ENCODE measurements at regions of chr20 and their contacts with region 1.

Region 1: GRCh38 chr20:5569021-5569420 is 181.2 kb upstream of the SHLD1 start:
- DNase-seq: peak; percentile 22
- ATAC-seq: peak; percentile 92
- H3K4me3 ChIP-seq: no peak overlapping the region
- H3K27ac ChIP-seq: no peak overlapping the region
- H3K4me1 ChIP-seq: no peaks in the 10 kb centered on the region
- H3K27me3 ChIP-seq: no peaks in the 10 kb centered on the region
- CTCF ChIP-seq: peak; percentile 68; the same call in 1 of the 2 replicates

Region 2: GRCh38 chr20:5596401-5597193 is 27.6 kb after region 1 on chr20:
- CTCF ChIA-PET with region 1: no interaction called
- POLR2A ChIA-PET with region 1: no interaction called
- in situ Hi-C with region 1: no loop called
- intact Hi-C with region 1: no loop called
- DNase-seq: no peak
- ATAC-seq: no peak
- H3K4me3 ChIP-seq: no peak overlapping the region
- H3K27ac ChIP-seq: no peak overlapping the region
- H3K4me1 ChIP-seq: no peaks in the 10 kb centered on the region
- H3K27me3 ChIP-seq: no peaks in the 10 kb centered on the region
- CTCF ChIP-seq: no peak

Region 3: DNA sequence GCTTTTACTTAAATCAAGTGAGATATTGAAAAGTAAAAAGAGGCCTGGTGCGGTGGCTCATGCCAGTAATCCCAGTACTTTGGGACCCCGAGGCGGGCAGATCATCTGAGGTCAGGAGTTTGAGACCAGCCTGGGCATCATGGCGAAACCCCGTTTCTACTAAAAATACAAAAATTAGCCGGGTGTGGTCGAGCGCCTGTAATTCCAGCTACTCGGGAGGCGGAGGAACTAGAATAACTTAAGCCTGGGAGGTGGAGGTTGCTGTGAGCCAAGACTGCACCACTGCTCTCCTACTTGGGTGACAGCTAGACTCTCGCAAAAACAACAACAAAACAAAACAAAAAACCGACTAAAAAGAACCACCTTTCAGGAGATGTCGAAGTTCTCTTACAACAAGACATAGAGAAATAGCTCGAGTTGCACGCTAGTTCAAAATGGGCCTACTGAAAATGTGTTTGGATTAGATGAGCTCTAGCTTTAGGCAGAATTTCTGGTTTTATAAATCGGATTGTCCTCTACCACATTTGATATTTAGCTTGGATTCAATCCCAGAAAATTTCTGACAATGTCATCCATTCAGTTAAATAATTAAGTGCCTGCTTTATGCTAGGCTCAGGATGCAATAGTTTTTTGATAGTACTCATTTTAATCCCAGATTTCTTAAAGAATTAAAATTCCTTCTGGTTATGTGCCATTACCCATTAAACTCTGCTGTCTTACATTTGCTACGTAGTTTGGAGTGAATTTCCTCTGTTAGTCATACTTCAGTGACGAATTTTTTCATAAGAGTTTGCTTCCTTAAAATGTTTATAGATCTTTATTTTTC is 43.7 kb after region 1 on chr20:
- CTCF ChIA-PET with region 1: no interaction called
- POLR2A ChIA-PET with region 1: interaction called, 13 read pairs
- in situ Hi-C with region 1: no loop called
- intact Hi-C with region 1: no loop called
- DNase-seq: no peak
- ATAC-seq: no peak
- H3K4me3 ChIP-seq: no peak overlapping the region
- H3K27ac ChIP-seq: no peak overlapping the region
- H3K4me1 ChIP-seq: peaks cover 17% of the 10 kb centered on the region
- H3K27me3 ChIP-seq: no peaks in the 10 kb centered on the region
- CTCF ChIP-seq: no peak

Region 4: GRCh38 chr20:5745416-5746030 is 176.5 kb after region 1 on chr20:
- CTCF ChIA-PET with region 1: no interaction called
- POLR2A ChIA-PET with region 1: interaction called, 11 read pairs
- in situ Hi-C with region 1: no loop called
- intact Hi-C with region 1: no loop called
- DNase-seq: no peak
- ATAC-seq: no peak
- H3K4me3 ChIP-seq: no peak overlapping the region
- H3K27ac ChIP-seq: no peak overlapping the region
- H3K4me1 ChIP-seq: no peaks in the 10 kb centered on the region
- H3K27me3 ChIP-seq: no peaks in the 10 kb centered on the region
- CTCF ChIP-seq: no peak

Region 5: DNA sequence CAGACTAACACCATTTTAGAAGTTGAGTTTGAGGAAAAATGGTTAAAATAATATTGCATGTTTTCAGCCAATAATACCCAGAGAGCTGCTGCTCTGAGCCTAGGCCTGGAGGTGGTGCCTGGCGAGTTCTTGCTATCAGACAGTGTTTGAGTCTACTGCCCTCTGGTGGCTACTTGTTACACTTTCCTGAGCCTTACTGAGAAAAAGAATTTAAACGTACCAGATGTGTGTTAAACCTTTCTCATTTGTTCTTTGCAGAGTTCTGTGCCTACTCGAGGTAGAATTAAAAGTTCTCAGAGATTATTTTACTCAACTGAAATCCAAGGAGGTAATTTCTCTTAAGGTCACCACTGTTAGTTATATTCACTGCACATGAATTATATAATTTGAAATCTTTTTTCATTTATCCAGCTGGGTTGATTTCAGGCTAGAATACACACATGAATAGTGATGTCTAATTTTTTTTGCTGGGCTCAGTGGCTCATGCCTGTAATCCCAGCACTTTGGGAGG is 219.4 kb after region 1 on chr20:
- CTCF ChIA-PET with region 1: interaction called, 3 read pairs
- POLR2A ChIA-PET with region 1: no interaction called
- in situ Hi-C with region 1: no loop called
- intact Hi-C with region 1: loop called (anchors 2 kb)
- DNase-seq: peak; percentile 72
- ATAC-seq: peak; percentile 96
- H3K4me3 ChIP-seq: no peak overlapping the region
- H3K27ac ChIP-seq: no peak overlapping the region
- H3K4me1 ChIP-seq: no peaks in the 10 kb centered on the region
- H3K27me3 ChIP-seq: no peaks in the 10 kb centered on the region
- CTCF ChIP-seq: peak; percentile 89